ENCODE measurements at regions of chr12 and their contacts with region 1.

Region 1: DNA sequence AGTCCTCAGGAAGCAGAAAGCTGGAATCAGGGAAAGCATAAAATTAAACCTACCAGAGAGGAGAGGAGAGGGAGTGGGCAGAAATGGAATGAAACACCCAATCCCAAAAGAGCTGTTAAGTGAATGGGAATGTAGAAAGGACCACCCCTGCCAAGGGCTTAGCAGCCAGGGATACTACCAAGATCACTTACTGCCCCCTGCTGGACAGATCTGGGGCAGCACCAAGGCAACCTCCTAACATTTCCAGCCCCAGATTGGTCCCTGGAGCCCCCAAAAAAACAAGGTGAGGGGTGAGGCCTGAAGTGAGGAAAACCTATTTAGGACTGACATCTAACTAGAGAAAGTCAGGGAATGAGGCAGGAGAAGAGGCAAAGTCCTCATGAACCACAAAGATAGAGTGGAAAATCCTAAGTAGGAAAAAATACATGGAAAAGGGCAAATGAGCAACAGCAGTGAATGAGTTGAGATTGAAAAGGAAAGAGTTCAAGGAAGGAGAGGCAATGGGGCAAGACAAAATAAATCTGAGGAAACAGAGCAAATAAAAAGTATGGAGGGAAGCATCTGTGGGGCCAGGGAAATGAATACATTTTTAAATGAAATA is 11.2 kb upstream of the FKBP11 start:
- DNase-seq: peak; percentile 38 to 91 (median 78)

Region 2: GRCh38 chr12:48857278-48857994 is 79.0 kb before region 1 on chr12:
- intact Hi-C with region 1: loop called (anchors 5 kb)
- DNase-seq: no peak

Measured in head of caudate nucleus (tissue), 42 donors.